ENCODE measurements at regions of chr7 and their contacts with region 1.

Region 1: GRCh38 chr7:26200444-26201246 is at the start of gene HNRNPA2B1:
- DNase-seq: peak; percentile 97
- H3K4me3 Mint-ChIP-seq: peak within 1 kb of the TSS; percentile 100
- H3K27ac Mint-ChIP-seq: peak within 1 kb of the TSS; percentile 100
- H3K4me1 Mint-ChIP-seq: peaks cover 45% of the 10 kb centered on the region
- H3K27me3 Mint-ChIP-seq: no peaks in the 10 kb centered on the region
- total RNA-seq, gene HNRNPA2B1: 835 and 845 TPM in 2 replicates

Region 2: GRCh38 chr7:25894902-25895791 is 305.5 kb before region 1 on chr7:
- intact Hi-C with region 1: loop called (anchors 2 kb)
- DNase-seq: peak; percentile 53
- H3K4me3 Mint-ChIP-seq: peak overlapping the region; percentile 53
- H3K27ac Mint-ChIP-seq: no peak overlapping the region
- H3K4me1 Mint-ChIP-seq: peaks cover 31% of the 10 kb centered on the region
- H3K27me3 Mint-ChIP-seq: peaks cover 7% of the 10 kb centered on the region

Region 3: DNA sequence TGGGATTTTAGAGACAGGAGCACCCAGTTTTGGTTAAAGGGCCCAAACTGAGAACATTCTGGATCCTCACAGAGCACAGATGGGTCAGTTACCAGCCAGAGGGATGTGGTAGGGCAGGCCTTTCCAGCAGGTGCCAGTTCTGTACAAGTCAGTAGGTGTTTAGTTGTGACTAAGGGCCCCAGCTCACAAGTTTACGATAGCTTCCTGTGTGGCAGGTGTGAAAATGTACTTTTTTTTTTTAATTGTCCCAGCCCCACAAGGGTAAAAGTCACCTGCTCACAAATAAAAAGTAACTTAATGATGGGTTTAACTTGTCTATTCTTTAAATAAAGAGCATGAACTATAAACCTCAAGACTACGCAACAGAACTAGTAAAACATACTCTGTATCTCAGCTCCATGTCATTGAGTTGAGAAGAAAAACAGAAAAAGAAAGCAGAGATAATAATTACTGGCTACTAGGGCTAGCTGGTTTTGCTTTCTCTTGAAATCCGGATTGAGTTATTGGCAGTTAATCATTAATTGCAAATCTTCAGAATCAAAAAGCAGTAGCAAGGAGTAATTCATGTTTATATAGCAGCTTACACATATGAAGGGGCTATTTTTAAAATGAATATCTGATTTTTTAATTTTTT is 33.2 kb before region 1 on chr7:
- intact Hi-C with region 1: no loop called
- DNase-seq: no peak
- H3K4me3 Mint-ChIP-seq: no peak overlapping the region
- H3K27ac Mint-ChIP-seq: peak overlapping the region; percentile 88
- H3K4me1 Mint-ChIP-seq: peaks cover 36% of the 10 kb centered on the region
- H3K27me3 Mint-ChIP-seq: no peaks in the 10 kb centered on the region

Region 4: DNA sequence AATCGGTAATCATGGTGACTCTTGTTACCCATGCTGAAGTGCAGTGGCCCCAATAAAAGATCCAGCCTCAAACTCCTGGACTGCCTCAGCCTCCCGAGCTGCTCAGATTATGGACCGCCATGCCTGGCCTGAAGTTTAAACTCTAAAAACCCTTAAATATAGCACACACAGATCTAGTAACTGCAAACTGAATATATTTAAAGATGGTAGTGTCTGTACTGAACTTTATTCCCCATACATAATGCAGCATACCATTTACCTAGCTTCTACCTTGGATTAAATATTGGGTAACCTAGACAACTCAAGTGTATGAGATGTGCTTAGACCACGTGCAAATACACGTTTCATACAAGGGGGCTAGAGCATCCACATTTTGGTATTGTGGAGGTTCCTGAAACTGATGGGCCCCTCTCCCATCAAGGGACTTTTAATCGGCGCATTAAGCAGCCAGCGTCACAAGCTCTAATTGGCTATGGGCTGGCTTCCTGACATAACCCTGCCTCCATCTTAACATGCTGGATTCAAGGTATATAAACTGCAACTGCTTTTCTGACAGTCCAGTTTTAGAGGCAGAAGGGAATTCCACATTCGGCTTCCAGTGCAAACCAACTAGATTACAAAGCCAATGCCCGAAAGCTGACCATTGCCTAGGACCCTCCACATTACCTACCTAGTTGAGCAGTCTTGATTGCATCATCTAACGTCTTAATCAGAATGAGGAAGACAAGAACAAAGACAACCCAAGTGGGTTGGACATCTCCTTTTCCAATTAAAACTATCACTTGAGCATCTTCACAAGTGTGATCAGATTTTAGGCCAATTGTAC is 13.1 kb before region 1 on chr7:
- intact Hi-C with region 1: loop called (anchors 1 kb)
- DNase-seq: no peak
- H3K4me3 Mint-ChIP-seq: no peak overlapping the region
- H3K27ac Mint-ChIP-seq: peak overlapping the region; percentile 83
- H3K4me1 Mint-ChIP-seq: peaks cover 73% of the 10 kb centered on the region
- H3K27me3 Mint-ChIP-seq: no peaks in the 10 kb centered on the region

Region 5: DNA sequence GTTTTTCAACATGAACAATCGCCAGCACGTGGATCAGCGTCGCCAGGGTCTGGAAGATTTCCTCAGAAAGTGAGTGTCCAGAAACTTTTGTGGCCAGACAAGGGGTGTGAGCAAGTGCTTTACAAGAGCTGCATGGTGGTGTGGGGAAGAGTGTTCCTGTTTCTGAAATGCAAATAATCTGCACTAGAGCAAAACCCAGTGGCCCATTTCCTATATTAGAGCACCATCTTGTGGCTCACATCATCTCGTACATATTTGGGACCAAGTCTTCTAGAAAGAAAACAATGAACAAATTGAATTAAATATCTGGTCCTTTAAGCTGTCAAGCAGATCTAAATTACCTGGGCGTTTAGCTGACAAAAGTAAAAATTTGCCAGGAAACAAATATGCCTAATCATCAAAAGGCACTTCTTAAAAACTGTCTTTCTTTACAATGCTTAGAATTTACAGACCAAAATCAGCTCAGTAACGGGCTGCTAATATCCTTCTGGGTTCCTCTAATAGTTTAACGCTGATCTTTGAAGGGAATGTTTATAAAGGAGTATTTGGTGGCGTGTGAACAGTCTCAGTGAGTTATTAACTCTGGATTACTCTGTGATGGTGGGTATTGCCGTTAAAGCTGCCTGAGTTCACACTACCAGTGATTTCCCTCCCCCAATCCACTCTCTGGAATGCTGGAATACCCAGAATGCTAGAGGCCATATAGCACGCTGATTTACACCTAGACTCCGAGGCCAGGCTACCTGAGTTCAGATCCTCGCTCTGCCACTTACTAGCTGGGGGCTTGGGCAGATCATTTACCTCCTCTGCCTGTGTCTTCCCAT is 164.6 kb after region 1 on chr7:
- intact Hi-C with region 1: loop called (anchors 2 kb)
- DNase-seq: peak; percentile 30
- H3K4me3 Mint-ChIP-seq: no peak overlapping the region
- H3K27ac Mint-ChIP-seq: peak overlapping the region; percentile 63
- H3K4me1 Mint-ChIP-seq: peaks cover 20% of the 10 kb centered on the region
- H3K27me3 Mint-ChIP-seq: no peaks in the 10 kb centered on the region

Region 6: DNA sequence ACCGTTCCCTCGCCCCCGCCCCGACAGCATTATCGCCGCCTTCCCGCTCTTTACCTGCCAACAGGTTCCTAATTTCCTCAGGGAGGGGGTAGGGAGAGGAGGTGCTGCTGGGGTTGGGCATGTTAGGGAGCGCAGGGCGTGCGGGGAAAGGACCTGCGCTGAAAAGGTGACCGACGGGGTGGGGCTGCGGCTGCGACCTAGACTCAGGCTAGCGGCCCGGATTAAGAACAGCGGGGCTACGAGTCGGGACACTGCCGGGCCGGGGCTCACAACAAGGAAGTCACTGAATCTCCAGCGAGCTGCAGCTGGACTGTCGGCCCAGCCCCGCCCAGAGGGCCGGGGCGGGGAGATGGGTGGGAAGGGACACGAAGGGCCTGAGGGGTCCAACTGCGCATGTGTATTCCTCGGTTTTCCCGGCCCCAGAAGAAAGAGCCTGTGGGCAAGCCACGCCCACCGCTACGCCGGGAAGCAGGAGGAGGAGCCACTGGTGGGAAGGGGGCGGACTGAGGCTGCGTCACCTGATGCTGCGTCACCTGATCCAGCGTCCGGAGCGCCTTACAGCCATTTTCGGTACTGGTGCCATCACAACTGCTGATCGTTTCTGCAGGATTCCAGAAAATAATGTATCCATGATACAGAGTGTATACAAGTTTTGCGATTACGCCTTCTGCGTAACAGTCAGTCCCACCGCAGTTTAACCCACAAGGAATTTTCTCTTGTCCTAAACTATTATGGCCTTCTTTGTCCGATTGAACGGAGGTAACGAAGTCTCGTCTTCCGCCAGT is 663.9 kb after region 1 on chr7 and contains the start of gene SKAP2:
- intact Hi-C with region 1: loop called (anchors 5 kb)
- DNase-seq: peak; percentile 86
- H3K4me3 Mint-ChIP-seq: peak within 1 kb of the TSS; percentile 92
- H3K27ac Mint-ChIP-seq: peak within 1 kb of the TSS; percentile 65
- H3K4me1 Mint-ChIP-seq: peaks cover 15% of the 10 kb centered on the region
- H3K27me3 Mint-ChIP-seq: peaks cover 49% of the 10 kb centered on the region
- total RNA-seq, gene SKAP2: 8.2 and 9.2 TPM in 2 replicates

Measured in activated T-helper 2 cell treated with anti-CD3 and anti-CD28 coated beads, Interferon-gamma antibody, Interleukin-2, Interleukin-4, amounts not matched to agents 10 μg/mL and 5 μg/mL and 100 μg/mL, durations not matched to agents 14 hours and 24 hours and 36 hours (primary cell).